ENCODE measurements at regions of chr3 and their contacts with region 1.

Region 1: DNA sequence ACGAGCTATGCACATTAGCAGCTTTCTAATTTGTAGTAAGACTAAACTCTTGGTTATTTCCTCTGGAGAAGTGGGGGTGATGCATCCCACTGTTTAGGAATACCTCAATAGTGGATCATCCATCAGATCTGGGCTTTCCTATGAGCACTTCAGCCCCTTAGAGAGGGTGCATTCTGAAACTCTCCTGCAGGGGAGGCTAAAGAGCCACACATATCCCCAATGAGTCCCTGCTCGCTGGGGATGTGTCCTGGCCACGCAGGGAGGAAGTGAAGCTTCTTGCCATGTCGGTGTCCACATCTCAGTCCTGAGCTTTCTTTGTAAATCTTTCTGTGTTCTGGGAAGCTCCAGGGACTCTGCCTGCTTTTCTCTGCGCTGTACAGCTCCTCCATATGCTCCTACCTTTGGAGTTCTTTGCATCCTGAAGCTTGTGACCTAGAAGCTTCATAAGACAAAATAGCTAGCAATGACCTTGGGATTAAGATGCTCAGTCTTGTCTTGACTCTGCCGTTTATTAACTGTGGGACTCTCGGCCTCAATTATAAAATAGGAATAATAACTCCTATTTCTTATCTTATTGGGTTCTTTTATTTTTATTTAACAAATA is 28.3 kb upstream of the MASP1 start:
- DNase-seq: peak; percentile 37
- H3K4me3 Mint-ChIP-seq: no peak overlapping the region
- H3K27ac Mint-ChIP-seq: no peak overlapping the region
- H3K4me1 Mint-ChIP-seq: peaks cover 9% of the 10 kb centered on the region
- H3K27me3 Mint-ChIP-seq: peaks cover 13% of the 10 kb centered on the region

Region 2: GRCh38 chr3:187223799-187224198 is 96.0 kb before region 1 on chr3:
- intact Hi-C with region 1: loop called (anchors 1 kb)
- DNase-seq: no peak
- H3K4me3 Mint-ChIP-seq: no peak overlapping the region
- H3K27ac Mint-ChIP-seq: no peak overlapping the region
- H3K4me1 Mint-ChIP-seq: no peaks in the 10 kb centered on the region
- H3K27me3 Mint-ChIP-seq: peaks cover 5% of the 10 kb centered on the region

Region 3: DNA sequence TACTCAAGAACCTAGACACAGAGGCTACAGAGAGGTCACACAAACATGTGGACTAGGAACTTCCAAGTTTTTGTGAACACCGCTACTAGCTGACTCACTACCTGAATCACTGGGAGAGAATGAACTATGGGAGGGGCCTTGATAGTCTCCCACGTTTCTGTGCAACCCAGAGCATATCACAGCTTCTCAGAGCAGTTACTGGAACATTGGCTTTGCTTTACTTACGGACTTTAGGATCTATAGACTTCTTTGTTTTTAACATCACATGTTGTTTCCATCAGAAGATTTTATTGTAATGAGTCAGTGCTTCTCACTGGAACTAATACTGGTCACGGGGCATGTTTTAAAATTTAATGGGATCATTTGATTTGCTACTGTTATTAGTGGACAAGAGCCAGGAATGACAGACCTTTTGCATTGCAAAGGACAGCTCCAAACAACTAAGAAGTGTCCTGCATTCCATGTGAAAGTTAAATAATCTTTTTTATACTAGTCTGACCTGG is 84.0 kb after region 1 on chr3:
- intact Hi-C with region 1: loop called (anchors 5 kb)
- DNase-seq: no peak
- H3K4me3 Mint-ChIP-seq: no peak overlapping the region
- H3K27ac Mint-ChIP-seq: no peak overlapping the region
- H3K4me1 Mint-ChIP-seq: no peaks in the 10 kb centered on the region
- H3K27me3 Mint-ChIP-seq: peaks cover 22% of the 10 kb centered on the region

Region 4: GRCh38 chr3:187507905-187508304 is 188.1 kb after region 1 on chr3:
- intact Hi-C with region 1: loop called (anchors 2 kb)
- DNase-seq: no peak
- H3K4me3 Mint-ChIP-seq: no peak overlapping the region
- H3K27ac Mint-ChIP-seq: no peak overlapping the region
- H3K4me1 Mint-ChIP-seq: no peaks in the 10 kb centered on the region
- H3K27me3 Mint-ChIP-seq: peaks cover 6% of the 10 kb centered on the region

Region 5: GRCh38 chr3:187616307-187616972 is 296.6 kb after region 1 on chr3:
- intact Hi-C with region 1: loop called (anchors 1 kb)
- DNase-seq: peak; percentile 22
- H3K4me3 Mint-ChIP-seq: no peak overlapping the region
- H3K27ac Mint-ChIP-seq: no peak overlapping the region
- H3K4me1 Mint-ChIP-seq: no peaks in the 10 kb centered on the region
- H3K27me3 Mint-ChIP-seq: peaks cover 8% of the 10 kb centered on the region

Region 6: GRCh38 chr3:187714404-187714979 is 394.7 kb after region 1 on chr3:
- intact Hi-C with region 1: loop called (anchors 1 kb)
- DNase-seq: peak; percentile 59
- H3K4me3 Mint-ChIP-seq: no peak overlapping the region
- H3K27ac Mint-ChIP-seq: no peak overlapping the region
- H3K4me1 Mint-ChIP-seq: peaks cover 6% of the 10 kb centered on the region
- H3K27me3 Mint-ChIP-seq: peaks cover 5% of the 10 kb centered on the region